Posterior vena cava (tissue), 2 donors: ENCODE measurements at regions of chr2 and their contacts with region 1.

Region 1: DNA sequence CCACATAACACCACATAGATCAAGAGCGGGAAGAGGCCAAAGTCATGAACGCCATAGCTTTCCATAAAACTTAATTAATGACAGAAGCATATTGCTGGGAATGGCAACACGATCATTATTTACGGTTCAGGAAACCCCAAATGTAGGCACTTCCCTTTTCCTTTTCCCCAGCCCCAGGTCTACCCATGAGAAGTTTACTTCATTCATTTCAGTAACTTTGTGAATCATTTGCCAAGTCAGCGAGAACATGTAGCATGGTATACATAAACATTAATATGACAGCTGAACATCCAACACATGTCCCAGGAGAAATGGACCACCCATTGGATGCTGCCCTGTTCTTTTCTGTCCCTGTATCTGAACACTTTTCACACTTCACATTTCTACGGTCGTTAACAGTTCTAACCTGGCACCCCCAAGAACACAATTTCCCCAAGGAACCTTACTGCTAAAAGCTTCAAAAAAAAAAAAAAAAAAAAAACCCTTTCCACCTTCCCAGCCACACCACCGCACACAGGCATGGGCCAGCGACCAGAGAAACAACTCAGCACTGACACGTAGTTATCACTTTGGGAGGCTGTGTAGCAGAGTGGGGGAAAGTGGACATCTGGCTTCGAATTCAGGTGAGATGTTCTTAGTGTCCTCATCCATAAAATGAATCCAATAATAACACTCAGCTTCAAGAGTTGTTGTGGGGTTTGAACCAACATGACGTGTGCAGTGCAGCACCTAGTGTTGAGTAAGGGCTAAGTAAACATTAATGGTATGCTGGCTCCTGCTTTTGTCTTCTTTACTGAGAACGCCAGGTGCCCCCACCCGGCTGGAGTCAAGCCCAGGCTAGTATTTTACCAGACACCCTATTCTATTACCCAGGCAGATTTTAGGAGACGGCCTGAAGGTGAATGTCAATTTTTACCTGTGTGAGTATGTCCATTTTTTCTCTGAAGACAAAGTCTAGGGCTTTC is 371.5 kb downstream of the LNPK start:
- DNase-seq: no peak

Region 2: DNA sequence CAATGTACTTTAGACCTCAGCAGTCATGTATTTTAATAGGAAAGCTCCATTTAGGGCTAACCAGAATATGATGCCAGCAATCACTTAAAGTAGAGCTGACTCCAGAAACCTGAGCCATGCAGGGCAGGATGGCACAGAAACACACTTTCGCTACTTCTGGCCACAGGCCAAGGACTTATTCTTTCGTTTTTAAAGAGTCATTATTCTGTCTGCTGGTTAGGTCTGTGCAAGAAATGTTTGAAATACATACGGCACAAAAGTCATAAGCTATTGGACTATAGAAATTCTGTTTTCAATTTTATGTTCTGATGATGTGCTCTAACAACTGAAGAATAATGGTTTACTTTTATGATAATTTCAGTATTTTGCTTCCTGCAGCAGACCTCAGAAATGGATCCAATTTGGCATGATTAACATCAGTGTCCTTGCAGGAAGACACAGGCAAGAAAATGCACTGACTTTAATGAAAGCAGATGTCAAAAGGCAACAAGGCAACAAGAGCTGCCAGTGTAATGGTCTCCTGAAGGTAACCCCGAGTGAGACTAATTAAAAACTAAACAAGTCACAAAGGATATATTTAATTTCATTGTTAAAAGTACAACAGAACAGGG is 751.9 kb before region 1 on chr2:
- intact Hi-C with region 1: loop called in 1 of 2 experiments (anchors 10 kb)
- DNase-seq: no peak

Region 3: DNA sequence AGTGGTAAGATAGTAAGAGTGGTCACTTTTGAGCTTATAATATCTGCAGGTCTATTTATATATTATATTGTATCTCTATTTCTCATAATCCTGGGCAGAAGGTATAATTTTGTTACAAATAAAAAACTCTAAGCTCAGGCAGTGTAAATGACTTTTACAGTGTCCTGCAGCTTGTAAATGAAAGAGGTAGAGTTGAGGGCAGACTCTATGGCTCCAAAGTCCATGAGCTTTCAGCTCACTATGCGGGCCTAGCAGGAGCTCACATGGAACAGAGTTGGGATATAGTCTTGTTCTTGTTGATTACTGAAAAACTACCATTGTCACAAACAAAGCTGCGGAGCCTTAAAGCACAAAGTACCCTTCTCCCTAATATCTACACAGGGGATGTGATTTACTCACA is 10.1 kb after region 1 on chr2:
- intact Hi-C with region 1: no loop called
- DNase-seq: no peak